WTC11 (cell line): ENCODE measurements at regions of chr1 and their contacts with region 1.

Region 1: DNA sequence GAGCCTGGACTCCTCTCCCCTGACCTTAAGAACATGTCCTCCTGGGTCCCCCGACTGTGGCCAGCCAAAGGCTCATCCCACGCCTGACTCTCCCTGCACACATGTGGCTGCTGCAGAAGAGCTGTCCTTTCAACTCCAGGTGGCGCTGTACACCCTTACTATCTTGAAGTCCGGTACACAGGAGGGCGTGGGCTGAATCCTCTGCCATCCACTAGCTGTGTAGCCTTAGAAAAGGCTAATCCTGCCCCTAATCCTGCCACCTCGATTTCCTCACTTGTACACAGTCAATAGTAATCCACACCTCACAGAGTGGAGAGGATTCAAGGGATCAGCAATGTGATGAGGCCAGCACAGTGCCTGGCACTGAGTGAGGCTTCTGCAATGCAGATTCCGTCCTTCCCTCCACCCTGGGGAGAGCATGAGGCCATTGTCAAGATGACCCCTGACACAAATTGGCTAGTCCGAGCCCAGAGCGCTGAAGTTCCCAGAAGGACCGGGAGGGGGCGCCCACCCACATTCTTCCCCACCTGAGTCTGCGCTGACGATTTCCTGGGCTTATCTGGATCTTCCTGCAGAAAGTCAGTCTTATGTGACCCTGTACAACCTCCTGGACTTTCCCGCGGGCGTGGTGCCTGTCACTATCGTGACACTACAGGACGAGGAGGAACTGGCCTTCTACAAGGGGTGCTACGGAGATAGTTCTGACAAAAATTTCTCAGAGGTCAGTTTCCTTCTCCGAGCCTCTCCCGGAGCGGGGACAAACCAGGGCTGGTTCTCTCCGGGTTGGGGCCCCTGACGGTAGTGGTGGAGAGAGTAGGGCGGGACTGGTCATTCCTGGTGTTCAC is 47.1 kb upstream of the DMBX1 start:
- DNase-seq: peak; percentile 96
- ATAC-seq: peak; percentile 85
- H3K4me3 Mint-ChIP-seq: peak overlapping the region; percentile 86
- H3K27ac Mint-ChIP-seq: peak overlapping the region; percentile 96
- H3K4me1 Mint-ChIP-seq: peaks cover 22% of the 10 kb centered on the region
- H3K27me3 Mint-ChIP-seq: peaks cover 51% of the 10 kb centered on the region
- CTCF ChIP-seq: peak; percentile 96

Region 2: GRCh38 chr1:46422261-46422871 is 20.2 kb before region 1 on chr1:
- CTCF ChIA-PET with region 1: interaction called, 10 read pairs
- POLR2A ChIA-PET with region 1: no interaction called
- DNase-seq: no peak
- ATAC-seq: no peak
- H3K4me3 Mint-ChIP-seq: no peak overlapping the region
- H3K27ac Mint-ChIP-seq: no peak overlapping the region
- H3K4me1 Mint-ChIP-seq: no peaks in the 10 kb centered on the region
- H3K27me3 Mint-ChIP-seq: peaks cover 10% of the 10 kb centered on the region; the same call in 1 of the 2 replicates
- CTCF ChIP-seq: no peak

Region 3: GRCh38 chr1:46477153-46477929 is 34.8 kb after region 1 on chr1:
- CTCF ChIA-PET with region 1: interaction called, 40 read pairs
- POLR2A ChIA-PET with region 1: interaction called, 5 read pairs
- DNase-seq: peak; percentile 85
- ATAC-seq: peak; percentile 70
- H3K4me3 Mint-ChIP-seq: no peak overlapping the region
- H3K27ac Mint-ChIP-seq: no peak overlapping the region
- H3K4me1 Mint-ChIP-seq: peaks cover 31% of the 10 kb centered on the region
- H3K27me3 Mint-ChIP-seq: peaks cover 71% of the 10 kb centered on the region
- CTCF ChIP-seq: peak; percentile 88

Region 4: GRCh38 chr1:46517010-46517600 is 74.6 kb after region 1 on chr1:
- CTCF ChIA-PET with region 1: interaction called, 27 read pairs
- POLR2A ChIA-PET with region 1: no interaction called
- DNase-seq: peak; percentile 76
- ATAC-seq: peak; percentile 83
- H3K4me3 Mint-ChIP-seq: peak overlapping the region; percentile 49
- H3K27ac Mint-ChIP-seq: peak overlapping the region; percentile 79; the same call in 1 of the 2 replicates
- H3K4me1 Mint-ChIP-seq: peaks cover 69% of the 10 kb centered on the region
- H3K27me3 Mint-ChIP-seq: peaks cover 52% of the 10 kb centered on the region
- CTCF ChIP-seq: no peak

Region 5: DNA sequence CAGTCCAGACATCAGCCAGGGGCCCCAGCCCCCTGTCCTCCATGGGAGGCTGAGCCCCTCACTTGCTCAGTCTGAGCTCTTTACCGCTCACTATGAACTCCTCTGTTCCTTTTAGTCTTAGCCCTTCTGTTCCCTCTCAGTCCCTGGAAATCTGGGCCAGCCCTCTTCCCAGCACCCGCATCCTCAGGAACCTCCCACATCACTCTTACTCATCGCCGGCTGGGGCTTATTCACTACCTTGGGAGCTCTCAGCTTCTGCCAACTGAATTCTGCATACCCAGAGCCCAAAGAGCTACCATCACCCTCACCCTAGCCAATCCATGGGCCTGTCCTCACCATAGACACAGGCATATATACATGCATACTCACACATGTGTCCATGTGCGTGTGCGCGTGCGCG is 97.4 kb after region 1 on chr1:
- CTCF ChIA-PET with region 1: interaction called, 69 read pairs
- POLR2A ChIA-PET with region 1: no interaction called
- DNase-seq: no peak
- ATAC-seq: no peak
- H3K4me3 Mint-ChIP-seq: no peak overlapping the region
- H3K27ac Mint-ChIP-seq: no peak overlapping the region
- H3K4me1 Mint-ChIP-seq: peaks cover 17% of the 10 kb centered on the region
- H3K27me3 Mint-ChIP-seq: peaks cover 93% of the 10 kb centered on the region
- CTCF ChIP-seq: no peak

Region 6: DNA sequence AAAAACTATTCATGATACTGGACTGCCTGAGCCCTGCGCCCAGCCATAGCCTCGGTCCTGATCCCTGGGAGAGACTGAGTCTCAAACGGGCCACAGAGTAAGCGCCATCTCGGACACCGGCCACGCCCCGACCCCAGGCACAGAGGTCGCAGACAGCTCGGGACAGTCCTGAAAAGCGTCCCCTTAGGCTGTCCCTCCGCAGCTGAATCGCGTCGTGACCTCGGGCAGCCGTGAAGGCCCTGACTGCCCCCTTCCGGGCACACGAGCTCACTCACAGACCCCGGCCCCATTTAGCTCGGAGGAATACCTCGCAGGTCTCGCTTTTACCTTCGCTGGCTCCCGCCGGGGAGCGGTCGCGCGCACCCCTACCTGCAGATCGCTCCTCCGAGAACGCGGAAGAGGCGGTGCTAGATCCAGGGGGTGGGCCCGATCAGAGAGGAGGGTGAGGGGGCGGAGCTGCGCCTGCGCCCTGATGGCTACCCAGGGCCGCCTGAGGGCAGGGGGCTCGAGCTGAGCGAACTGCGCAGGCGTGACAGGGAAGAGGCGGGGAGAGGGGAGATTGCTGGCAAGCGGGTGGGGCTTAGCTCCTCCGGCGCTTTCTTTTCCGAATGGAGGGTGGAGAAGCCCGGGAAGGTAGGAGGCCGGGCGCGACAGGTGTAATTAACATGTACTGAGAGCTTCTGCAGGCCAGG is 161.5 kb after region 1 on chr1 and contains the start of gene MKNK1:
- CTCF ChIA-PET with region 1: interaction called, 27 read pairs
- POLR2A ChIA-PET with region 1: interaction called, 4 read pairs
- DNase-seq: peak; percentile 100
- ATAC-seq: peak; percentile 93
- H3K4me3 Mint-ChIP-seq: peak within 1 kb of the TSS; percentile 89
- H3K27ac Mint-ChIP-seq: peak within 1 kb of the TSS; percentile 79
- H3K4me1 Mint-ChIP-seq: peaks cover 21% of the 10 kb centered on the region
- H3K27me3 Mint-ChIP-seq: no peaks in the 10 kb centered on the region
- CTCF ChIP-seq: no peak
- total RNA-seq, gene MKNK1: 17.5 to 18.6 TPM (median 18.0 TPM) in 3 replicates

Region 7: DNA sequence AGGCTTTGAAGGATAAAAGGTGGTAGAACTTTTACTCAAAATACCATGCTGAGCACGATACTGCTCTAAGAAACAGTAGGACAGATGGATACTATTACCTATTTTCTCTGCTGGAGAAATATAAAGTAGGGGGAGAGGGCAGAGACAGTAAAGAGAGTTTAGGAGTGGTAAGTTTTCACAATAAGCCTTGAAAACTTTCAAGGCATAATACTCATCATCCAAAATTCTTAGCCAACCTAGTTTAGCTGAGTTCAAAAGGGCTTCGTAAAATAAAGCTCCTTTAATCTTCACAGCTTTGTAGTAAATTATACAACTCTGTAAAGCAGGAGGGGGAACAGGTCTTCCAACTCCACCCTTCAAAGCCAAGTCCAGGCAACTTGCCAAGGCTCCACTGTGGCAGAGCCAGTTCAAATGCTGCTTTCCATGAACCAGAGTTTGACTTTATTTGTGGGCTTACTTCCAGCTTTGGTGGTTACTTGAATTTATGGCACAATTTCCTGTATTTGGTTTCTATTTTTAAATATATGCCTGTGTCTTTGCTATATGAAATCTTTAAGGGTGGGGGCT is 244.6 kb after region 1 on chr1:
- CTCF ChIA-PET with region 1: no interaction called
- POLR2A ChIA-PET with region 1: no interaction called
- DNase-seq: no peak
- ATAC-seq: no peak
- H3K4me3 Mint-ChIP-seq: no peak overlapping the region
- H3K27ac Mint-ChIP-seq: no peak overlapping the region
- H3K4me1 Mint-ChIP-seq: no peaks in the 10 kb centered on the region
- H3K27me3 Mint-ChIP-seq: no peaks in the 10 kb centered on the region
- CTCF ChIP-seq: no peak